A549 (cell line): ENCODE measurements at regions of chr2 and their contacts with region 1.

Region 1: DNA sequence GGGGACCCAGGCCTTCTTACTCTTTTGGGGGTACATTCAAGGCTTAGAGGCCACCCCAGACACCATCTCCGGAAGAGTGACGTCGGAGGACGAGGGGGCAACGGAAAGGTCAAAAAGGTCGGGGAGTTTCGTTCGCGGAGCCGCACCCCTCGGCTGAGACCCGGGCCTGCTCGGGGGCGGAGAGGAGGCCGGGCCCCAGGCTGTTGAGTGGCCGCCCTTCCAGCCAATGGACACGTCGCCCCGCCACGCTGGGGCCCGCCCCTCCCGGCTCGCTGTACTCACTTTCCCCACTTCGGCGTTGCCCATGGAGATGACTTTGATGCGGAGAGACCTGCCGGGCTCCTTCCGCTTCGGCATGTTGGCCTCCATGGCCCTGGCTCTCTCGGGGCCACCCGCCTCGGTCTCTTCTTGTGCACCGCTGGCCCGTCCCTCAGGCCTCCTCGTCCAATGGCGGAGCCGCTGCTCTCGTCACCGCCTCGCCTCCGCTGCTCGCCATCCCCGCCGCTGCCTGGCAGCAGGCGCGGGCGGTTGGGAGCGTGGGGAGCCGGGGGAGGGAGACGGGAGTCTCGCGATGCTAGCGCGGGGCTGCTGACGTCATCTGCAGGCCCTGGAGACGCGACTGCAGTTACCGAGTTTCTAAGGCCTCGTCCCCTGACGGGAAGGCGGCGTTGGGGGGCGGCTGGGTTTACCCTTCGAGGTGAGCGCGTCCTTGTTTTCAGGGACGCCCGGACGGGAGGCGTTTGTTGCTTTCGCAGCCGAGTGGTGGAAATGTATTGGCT is at the start of gene DNAJC27:
- DNase-seq: peak; percentile 99
- ATAC-seq: peak; percentile 97
- H3K4me3 ChIP-seq: peak within 1 kb of the TSS; percentile 94
- H3K27ac ChIP-seq: peak within 1 kb of the TSS; percentile 93 to 98
- H3K4me1 ChIP-seq: peaks cover 11% of the 10 kb centered on the region; the same call in 2 of the 3 replicates
- CTCF ChIP-seq: no peak
- EP300 ChIP-seq: no peak
- POLR2A ChIP-seq: peak; percentile 93
- RAD21 ChIP-seq: no peak
- polyA plus RNA-seq, gene DNAJC27: 5.2 and 7.8 TPM in 2 replicates

Region 2: DNA sequence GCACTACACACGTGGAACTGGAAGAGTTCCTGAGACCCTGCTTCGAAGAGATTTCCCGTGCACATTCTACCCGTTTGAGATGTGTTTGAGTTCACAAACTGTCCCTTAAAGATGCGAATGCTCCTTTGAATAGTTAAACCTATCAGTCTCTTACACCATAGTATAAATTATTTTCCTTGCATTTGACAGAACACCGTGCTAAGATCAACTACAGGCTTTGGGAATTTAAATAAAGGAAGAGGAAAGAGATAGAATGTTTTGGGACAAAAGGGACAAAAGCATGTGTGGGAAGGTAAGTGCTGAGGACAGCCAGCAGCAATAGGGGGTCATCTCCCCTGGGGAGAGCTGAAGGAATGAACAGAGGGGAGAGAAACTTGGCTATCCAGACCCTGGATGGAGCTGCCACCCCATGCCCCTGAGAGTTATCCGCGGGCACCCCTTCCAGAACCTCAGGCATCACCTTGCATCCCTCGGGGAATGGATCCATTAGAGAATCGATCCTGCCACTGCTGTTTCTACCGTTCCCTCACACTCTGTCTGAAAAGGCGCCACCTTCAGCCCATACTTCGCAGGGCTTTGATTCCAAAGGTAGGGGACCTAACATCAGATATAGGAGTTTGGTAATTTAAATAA is 50.8 kb before region 1 on chr2:
- CTCF ChIA-PET with region 1: no interaction called
- POLR2A ChIA-PET with region 1: no interaction called
- DNase-seq: peak; percentile 33 to 75
- ATAC-seq: peak; percentile 33 to 77; a peak in 4 of 6 replicates
- H3K4me3 ChIP-seq: peak overlapping the region; percentile 92
- H3K27ac ChIP-seq: peak overlapping the region; percentile 85 to 96
- H3K4me1 ChIP-seq: peaks cover 13% of the 10 kb centered on the region; the same call in 2 of the 3 replicates
- CTCF ChIP-seq: peak; percentile 76
- EP300 ChIP-seq: no peak
- POLR2A ChIP-seq: no peak
- RAD21 ChIP-seq: peak; percentile 26 to 37; a peak in 3 of 5 replicates

Region 3: DNA sequence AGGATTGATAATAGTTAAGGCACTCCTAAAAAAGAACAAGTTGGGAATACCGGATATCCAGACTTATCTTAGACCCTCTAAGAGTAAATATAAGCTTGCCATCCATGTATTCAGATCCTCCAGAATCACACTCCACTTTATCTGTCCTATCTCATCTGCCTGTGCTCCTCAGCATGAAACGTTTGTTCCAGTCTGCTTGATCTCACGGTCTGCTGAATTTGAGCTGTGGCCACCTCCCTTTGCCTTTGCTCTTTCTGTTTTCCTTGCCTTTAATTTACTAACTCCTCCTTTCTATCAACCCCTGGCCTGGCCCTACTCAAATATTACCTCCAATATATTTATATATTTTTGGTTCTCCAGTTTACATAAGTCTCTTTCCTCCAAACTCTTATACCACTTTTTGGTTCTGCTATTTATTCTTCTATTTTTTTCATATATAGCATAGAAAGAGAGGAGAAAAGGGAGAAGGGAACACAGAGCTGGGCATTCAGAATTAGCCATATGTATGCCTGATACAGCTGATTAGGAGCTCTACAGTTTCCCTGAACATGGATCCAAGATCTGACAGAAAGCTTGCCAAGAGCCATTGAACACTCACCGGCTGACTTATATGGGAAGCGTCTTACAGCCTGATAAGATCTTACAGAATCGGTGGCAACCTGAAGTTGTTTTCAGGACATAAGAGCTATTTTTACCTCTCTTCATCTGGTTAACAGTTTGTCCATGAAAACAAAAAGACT is 21.9 kb after region 1 on chr2:
- CTCF ChIA-PET with region 1: interaction called, 37 read pairs
- POLR2A ChIA-PET with region 1: interaction called, 3 read pairs
- DNase-seq: no peak
- ATAC-seq: no peak
- H3K4me3 ChIP-seq: no peak overlapping the region
- H3K27ac ChIP-seq: no peak overlapping the region
- H3K4me1 ChIP-seq: peaks cover 22% of the 10 kb centered on the region
- CTCF ChIP-seq: no peak
- EP300 ChIP-seq: no peak
- POLR2A ChIP-seq: no peak
- RAD21 ChIP-seq: no peak

Region 4: GRCh38 chr2:25041928-25042320 is 70.2 kb after region 1 on chr2 and contains the start of gene EFR3B:
- CTCF ChIA-PET with region 1: interaction called, 52 read pairs
- POLR2A ChIA-PET with region 1: interaction called, 14 read pairs
- DNase-seq: peak; percentile 91 to 94
- ATAC-seq: peak; percentile 88 to 95
- H3K4me3 ChIP-seq: peak within 1 kb of the TSS; percentile 94
- H3K27ac ChIP-seq: peak within 1 kb of the TSS; percentile 90
- H3K4me1 ChIP-seq: peaks cover 28% of the 10 kb centered on the region
- CTCF ChIP-seq: 0 out of 3 replicates have a peak, but pooled peaks have one; percentile 2
- EP300 ChIP-seq: no peak
- POLR2A ChIP-seq: peak; percentile 57
- RAD21 ChIP-seq: no peak
- polyA plus RNA-seq, gene EFR3B: 6.5 and 8.1 TPM in 2 replicates

Region 5: GRCh38 chr2:25078171-25079049 is 106.7 kb after region 1 on chr2:
- CTCF ChIA-PET with region 1: interaction called, 65 read pairs
- POLR2A ChIA-PET with region 1: no interaction called
- DNase-seq: peak; percentile 88 to 92
- ATAC-seq: peak; percentile 90 to 95
- H3K4me3 ChIP-seq: 0 out of 3 replicates have a peak overlapping the region, but pooled peaks have one; percentile 2
- H3K27ac ChIP-seq: peak overlapping the region; percentile 46 to 69
- H3K4me1 ChIP-seq: peaks cover 27% of the 10 kb centered on the region
- CTCF ChIP-seq: no peak
- EP300 ChIP-seq: 0 out of 5 replicates have a peak, but pooled peaks of 1 of the 2 experiments have one; percentile 15
- POLR2A ChIP-seq: no peak
- RAD21 ChIP-seq: peak in 1 of 2 experiments; percentile 25; a peak in 2 of 5 replicates

Region 6: DNA sequence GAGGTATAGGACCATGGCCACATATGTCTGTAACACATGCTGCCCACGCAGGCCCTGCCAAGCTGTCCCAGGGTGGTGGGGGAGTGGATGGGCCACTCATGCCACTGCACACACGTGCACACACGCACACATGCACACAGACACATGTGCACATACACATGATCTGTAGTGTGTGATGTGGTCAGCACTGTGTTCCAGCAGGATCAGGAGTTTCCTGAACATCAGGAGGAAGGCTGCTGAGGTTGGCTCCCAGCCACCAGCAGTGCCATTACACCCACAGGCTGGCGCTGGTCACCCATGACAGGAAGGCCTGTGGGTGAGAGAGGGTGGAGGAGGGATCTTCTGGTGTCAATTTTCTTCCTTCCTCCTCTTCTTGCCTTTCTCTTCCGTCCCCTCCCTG is 152.0 kb after region 1 on chr2:
- CTCF ChIA-PET with region 1: interaction called, 375 read pairs
- POLR2A ChIA-PET with region 1: interaction called, 14 read pairs
- DNase-seq: no peak
- ATAC-seq: peak; percentile 12 to 26; a peak in 1 of 6 replicates
- H3K4me3 ChIP-seq: no peak overlapping the region
- H3K27ac ChIP-seq: no peak overlapping the region
- H3K4me1 ChIP-seq: no peaks in the 10 kb centered on the region
- CTCF ChIP-seq: no peak
- EP300 ChIP-seq: no peak
- POLR2A ChIP-seq: no peak
- RAD21 ChIP-seq: no peak

Region 7: DNA sequence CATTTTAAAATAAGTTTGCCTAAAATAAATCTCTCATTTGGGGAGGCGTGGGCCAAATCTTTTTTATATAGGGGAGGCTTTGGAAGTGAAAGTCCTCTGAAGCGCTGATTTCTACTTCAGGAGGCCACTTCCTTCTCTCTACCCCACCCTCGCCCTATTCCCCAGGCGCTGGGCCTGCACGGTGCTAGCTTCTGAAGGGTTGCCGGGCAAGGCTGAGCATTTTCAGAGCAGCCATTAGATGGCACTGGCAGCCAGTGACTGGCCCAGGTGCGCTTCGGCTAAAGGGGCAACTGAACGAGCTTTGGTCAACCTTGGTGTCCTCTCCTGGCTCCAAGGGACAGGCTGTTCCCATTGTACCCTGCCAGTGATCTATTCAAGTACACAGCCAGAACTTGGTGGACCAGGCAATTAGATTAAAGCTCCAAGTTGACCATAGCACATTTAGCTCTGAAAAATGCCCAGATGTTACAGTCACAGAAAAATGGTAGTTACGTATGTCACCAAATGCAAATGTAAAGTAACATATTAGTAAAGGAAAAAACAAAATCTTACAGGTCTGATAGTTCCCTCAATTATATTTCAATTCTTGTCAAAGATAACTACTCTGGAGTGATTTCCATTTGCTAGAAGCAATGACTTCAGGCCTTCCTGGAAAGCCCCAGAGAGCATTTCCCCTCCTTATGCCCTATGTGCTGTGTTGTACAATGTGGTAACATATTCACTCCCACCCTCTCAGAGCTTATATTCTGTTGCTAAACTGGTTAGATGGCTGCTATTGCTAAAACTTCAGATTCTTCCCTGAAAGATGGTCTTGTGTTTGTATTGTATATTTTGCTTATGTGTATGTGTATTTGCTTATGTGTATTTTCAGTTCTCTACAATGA is 194.5 kb after region 1 on chr2:
- CTCF ChIA-PET with region 1: interaction called, 38 read pairs
- POLR2A ChIA-PET with region 1: no interaction called
- DNase-seq: peak; percentile 26 to 61
- ATAC-seq: peak; percentile 66 to 86
- H3K4me3 ChIP-seq: no peak overlapping the region
- H3K27ac ChIP-seq: no peak overlapping the region
- H3K4me1 ChIP-seq: no peaks in the 10 kb centered on the region
- CTCF ChIP-seq: peak; percentile 71
- EP300 ChIP-seq: no peak
- POLR2A ChIP-seq: no peak
- RAD21 ChIP-seq: peak; percentile 76 to 81